ENCODE measurements at regions of chr7 and their contacts with region 1.

Region 1: GRCh38 chr7:44196450-44196872 is 4.3 kb upstream of the YKT6 start:
- DNase-seq: peak; percentile 21
- ATAC-seq: peak; percentile 48
- H3K4me3 ChIP-seq: no peak overlapping the region
- H3K27ac ChIP-seq: no peak overlapping the region
- H3K4me1 ChIP-seq: peaks cover under 1% of the 10 kb centered on the region
- H3K27me3 ChIP-seq: no peaks in the 10 kb centered on the region
- CTCF ChIP-seq: peak; percentile 53

Region 2: DNA sequence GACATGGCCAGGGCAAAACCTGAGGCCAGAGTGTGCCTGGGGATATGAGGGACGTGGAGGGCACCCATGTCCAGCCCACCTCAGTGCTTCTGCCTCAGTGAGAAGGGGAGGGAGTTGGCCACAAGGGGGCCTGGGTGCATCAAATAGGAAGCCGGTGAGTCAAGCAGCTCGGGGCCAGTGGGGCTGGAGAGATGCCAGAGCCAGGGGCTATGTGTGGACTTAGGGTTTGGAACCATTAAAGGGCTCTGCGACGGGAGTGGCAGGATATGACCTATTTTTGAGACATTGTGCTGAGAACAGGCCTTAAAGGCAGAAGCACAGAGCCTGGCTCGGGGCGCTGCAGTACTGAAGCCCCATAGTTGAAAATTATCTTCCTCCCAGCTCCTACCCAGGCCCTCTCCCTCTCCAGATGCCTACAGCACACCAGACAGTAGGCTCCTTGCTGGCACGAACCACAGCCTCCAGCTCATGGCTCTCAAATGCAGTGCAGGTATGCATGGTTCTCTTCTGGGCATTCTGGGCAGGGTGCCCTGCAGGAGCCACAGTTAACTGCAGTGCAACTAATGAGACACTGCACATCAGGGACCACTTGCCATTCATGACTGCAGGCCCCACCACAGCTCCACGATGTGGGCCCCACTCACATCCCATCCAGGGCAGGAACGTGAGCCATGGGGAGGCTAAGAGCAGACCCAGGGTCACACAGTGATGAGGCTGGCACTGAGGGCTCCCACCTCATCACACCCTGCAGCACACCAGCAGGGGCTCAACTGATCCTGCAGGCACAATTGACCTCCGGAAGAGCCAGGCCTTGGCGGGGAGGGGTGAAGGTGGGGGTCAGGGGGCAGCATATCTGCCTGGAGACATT is 123.9 kb before region 1 on chr7:
- intact Hi-C with region 1: loop called (anchors 5 kb)
- DNase-seq: no peak
- ATAC-seq: peak; percentile 45
- H3K4me3 ChIP-seq: no peak overlapping the region
- H3K27ac ChIP-seq: no peak overlapping the region
- H3K4me1 ChIP-seq: peaks cover 4% of the 10 kb centered on the region
- H3K27me3 ChIP-seq: no peaks in the 10 kb centered on the region
- CTCF ChIP-seq: peak; percentile 57

Region 3: GRCh38 chr7:44240983-44241510 is 44.6 kb after region 1 on chr7:
- intact Hi-C with region 1: no loop called
- DNase-seq: peak; percentile 82
- ATAC-seq: peak; percentile 85
- H3K4me3 ChIP-seq: no peak overlapping the region
- H3K27ac ChIP-seq: no peak overlapping the region
- H3K4me1 ChIP-seq: peaks cover 5% of the 10 kb centered on the region
- H3K27me3 ChIP-seq: no peaks in the 10 kb centered on the region
- CTCF ChIP-seq: peak; percentile 69

Region 4: DNA sequence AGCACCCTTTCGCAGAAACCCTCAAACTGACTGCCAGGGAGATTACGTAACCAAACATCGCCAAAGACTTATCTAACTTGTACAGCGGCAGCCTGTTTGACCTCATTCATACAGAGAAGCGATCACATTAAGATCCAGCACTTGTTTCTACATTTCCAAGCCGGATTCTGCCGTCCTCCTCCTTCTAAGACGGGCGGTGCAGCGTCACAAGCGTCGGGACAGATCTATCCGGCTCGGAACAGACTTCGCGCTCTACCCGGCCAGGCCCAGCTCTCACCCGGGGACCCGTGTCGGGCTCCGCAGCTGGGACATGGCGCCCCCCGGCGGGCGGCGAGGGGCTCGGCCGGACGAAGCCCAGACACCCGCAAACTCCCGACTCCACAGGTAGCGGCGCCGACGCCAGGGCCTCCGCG is 651.1 kb after region 1 on chr7:
- intact Hi-C with region 1: no loop called
- DNase-seq: peak; percentile 95
- ATAC-seq: peak; percentile 88
- H3K4me3 ChIP-seq: peak overlapping the region; percentile 69
- H3K27ac ChIP-seq: peak overlapping the region; percentile 95
- H3K4me1 ChIP-seq: peaks cover 28% of the 10 kb centered on the region
- H3K27me3 ChIP-seq: no peaks in the 10 kb centered on the region
- CTCF ChIP-seq: peak; percentile 87

Measured in upper lobe of right lung (tissue), 1 donor.